ENCODE measurements at regions of chr14 and their contacts with region 1.

Region 1: DNA sequence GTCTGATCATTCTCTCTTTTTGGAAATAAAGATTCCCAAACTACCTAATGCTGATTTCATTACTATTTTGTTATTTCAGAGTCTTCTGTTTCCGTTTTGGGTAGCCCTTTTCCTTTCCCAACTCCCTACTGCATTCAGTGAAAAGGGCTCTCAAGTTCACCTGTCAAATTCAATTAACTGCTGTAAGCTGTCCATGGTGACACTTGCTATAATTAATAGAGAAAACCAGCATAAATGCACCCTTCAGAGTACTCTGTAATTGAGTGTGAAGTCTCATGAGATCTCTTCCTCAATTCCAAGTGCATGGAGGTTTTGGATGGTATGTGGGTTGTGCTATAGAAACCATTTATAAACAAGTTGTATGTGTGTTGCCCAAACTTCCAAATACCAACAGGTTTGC is 187.2 kb downstream of the RPL10L start:
- DNase-seq: no peak
- ATAC-seq: no peak
- H3K4me3 ChIP-seq: no peak overlapping the region
- H3K27ac ChIP-seq: no peak overlapping the region
- H3K4me1 ChIP-seq: no peaks in the 10 kb centered on the region
- H3K27me3 ChIP-seq: no peaks in the 10 kb centered on the region
- CTCF ChIP-seq: no peak
- POLR2A ChIP-seq: no peak

Region 2: GRCh38 chr14:46651526-46652144 is 187.3 kb after region 1 on chr14 and contains the start of gene RPL10L:
- intact Hi-C with region 1: loop called in 1 of 10 experiments (anchors 10 kb)
- DNase-seq: peak in 1 of 5 donors; percentile 48
- ATAC-seq: no peak
- H3K4me3 ChIP-seq: no peak within 1 kb of the TSS
- H3K27ac ChIP-seq: no peak within 1 kb of the TSS
- H3K4me1 ChIP-seq: no peaks in the 10 kb centered on the region
- H3K27me3 ChIP-seq: no peaks in the 10 kb centered on the region
- CTCF ChIP-seq: no peak
- POLR2A ChIP-seq: no peak
- total RNA-seq, gene RPL10L: not detected